CD8-positive, alpha-beta memory T cell (primary cell): ENCODE measurements at regions of chr22 and their contacts with region 1.

Region 1: DNA sequence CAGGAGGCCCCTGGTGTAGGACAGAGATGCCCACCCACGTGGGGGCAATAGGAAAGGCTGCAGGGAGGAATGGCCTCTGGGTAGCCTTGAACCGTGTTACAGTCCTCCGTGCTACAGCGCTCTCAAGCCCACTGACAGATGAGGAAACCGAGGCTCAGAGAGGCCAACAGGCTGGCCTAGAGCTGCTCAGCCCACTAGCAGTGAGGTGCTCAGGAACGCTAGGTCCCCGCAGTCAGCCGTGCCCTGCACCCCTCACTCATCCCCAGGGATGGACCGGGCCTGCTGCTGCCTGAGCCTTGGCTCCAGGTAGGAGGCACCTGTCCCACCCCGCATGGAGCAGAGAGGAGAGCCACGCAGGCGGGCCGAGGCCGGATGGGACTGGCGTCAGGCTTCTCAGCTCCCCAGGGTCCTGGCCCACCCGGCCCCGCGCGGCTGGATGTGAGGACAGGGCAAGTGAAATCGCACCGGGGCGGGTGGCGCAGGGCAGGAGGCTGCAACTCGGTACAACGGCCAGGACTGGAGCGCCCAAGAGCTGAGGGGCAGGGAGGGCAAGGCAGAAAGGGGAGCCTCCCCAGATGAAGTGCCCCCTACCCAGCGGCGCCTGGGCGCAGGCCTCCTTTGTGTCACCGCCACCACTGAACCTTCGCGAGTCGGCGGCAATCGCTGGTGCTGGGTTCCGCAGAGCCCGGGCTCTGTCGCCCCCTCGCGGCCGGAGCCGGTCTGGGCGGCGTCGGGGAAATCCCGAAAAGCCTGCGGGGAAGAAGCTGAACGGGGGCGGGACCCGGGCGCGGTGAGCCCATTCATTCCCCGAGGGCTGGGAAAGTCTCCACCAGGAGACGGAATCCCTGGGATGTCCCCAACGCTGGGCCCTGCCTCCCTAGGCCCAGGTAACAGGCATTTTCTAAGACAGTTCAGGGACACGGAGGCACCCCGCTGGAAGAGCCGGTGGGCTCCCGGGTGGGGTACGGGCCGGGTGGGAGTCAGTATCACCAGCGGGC is 8.4 kb upstream of the SLC2A11 start:
- DNase-seq: peak; percentile 75 to 86 (median 82)
- H3K4me3 ChIP-seq: no peak overlapping the region
- H3K4me3 Mint-ChIP-seq: no peak overlapping the region
- H3K27ac ChIP-seq: no peak overlapping the region
- H3K27ac Mint-ChIP-seq: no peak overlapping the region
- H3K4me1 ChIP-seq: no peaks in the 10 kb centered on the region
- H3K4me1 Mint-ChIP-seq: peaks cover 0 to 6% (median 0%) of the 10 kb centered on the region in 3 donors
- H3K27me3 ChIP-seq: no peaks in the 10 kb centered on the region
- H3K27me3 Mint-ChIP-seq: no peaks in the 10 kb centered on the region

Region 2: DNA sequence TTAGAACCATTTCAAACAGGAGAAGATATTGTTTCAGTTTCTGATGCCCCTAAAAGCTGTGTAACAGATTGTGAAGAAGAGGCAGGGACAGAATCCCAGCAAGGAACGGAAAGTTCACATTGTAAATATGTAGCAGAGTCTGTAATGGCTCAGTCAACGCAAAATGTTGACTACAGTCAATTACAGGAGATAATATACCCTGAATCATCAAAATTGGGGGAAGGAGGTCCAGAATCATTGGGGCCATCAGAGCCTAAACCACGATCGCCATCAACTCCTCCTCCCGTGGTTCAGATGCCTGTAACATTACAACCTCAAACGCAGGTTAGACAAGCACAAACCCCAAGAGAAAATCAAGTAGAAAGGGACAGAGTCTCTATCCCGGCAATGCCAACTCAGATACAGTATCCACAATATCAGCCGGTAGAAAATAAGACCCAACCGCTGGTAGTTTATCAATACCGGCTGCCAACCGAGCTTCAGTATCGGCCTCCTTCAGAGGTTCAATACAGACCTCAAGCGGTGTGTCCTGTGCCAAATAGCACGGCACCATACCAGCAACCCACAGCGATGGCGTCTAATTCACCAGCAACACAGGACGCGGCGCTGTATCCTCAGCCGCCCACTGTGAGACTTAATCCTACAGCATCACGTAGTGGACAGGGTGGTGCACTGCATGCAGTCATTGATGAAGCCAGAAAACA is 310.0 kb before region 1 on chr22:
- CTCF ChIA-PET with region 1: interaction called, 14 read pairs
- POLR2A ChIA-PET with region 1: no interaction called
- DNase-seq: peak; percentile 52 to 81 (median 63)
- H3K4me3 ChIP-seq: no peak overlapping the region
- H3K4me3 Mint-ChIP-seq: peak overlapping the region in 6 of 7 donors; percentile 35 to 70 (median 60)
- H3K27ac ChIP-seq: no peak overlapping the region
- H3K27ac Mint-ChIP-seq: peak overlapping the region in 4 of 8 donors; percentile 2 to 58 (median 23)
- H3K4me1 ChIP-seq: no peaks in the 10 kb centered on the region
- H3K4me1 Mint-ChIP-seq: peaks cover 9 to 14% (median 10%) of the 10 kb centered on the region in 3 donors
- H3K27me3 ChIP-seq: no peaks in the 10 kb centered on the region
- H3K27me3 Mint-ChIP-seq: peaks cover 0 to 4% of the 10 kb centered on the region in 2 donors

Region 3: GRCh38 chr22:23622634-23623033 is 226.7 kb before region 1 on chr22:
- CTCF ChIA-PET with region 1: interaction called, 15 read pairs
- POLR2A ChIA-PET with region 1: no interaction called
- DNase-seq: no peak
- H3K4me3 ChIP-seq: no peak overlapping the region
- H3K4me3 Mint-ChIP-seq: no peak overlapping the region
- H3K27ac ChIP-seq: no peak overlapping the region
- H3K27ac Mint-ChIP-seq: no peak overlapping the region
- H3K4me1 ChIP-seq: no peaks in the 10 kb centered on the region
- H3K4me1 Mint-ChIP-seq: no peaks in the 10 kb centered on the region
- H3K27me3 ChIP-seq: no peaks in the 10 kb centered on the region
- H3K27me3 Mint-ChIP-seq: peaks cover 0 to 2% of the 10 kb centered on the region in 2 donors

Region 4: DNA sequence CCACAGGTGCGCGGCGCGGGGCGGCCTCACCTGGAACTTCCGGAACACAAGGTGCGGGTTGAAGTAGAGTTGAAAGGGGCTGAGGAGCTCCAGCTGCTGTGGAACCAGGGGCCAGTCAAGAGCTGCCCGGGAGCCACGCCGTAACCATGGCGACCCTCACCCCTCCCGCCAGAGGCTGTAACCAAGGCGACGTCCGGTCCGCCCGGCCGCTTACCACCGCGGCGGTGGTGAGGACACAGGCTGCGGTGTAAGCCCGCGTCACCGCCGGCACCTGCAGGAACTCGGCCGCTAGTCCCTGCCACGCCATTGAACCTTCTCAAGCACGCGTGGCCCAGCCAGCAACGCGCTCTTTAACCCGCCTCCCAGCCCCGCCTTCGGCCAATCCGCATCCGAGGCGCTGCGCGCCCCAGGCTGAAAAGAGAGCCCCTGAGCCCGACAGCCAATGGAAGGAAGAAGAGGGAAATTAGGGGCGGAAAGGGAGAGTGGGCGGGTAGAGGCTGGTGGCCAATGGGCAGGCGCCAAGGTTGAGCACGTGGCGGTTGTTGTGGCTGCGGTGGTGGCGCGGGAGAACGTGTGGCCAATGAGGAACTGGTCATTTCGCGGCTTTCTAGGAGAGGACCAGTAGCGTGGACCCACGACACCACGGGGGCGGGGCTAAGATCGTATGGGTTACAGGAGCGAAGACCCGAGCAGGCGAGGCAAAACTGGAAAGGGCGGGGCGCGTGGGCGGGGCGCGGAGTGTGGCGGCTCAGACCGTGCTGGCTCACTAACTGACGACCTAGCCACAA is 10.4 kb before region 1 on chr22 and contains the start of gene DERL3:
- CTCF ChIA-PET with region 1: interaction called, 14 read pairs
- POLR2A ChIA-PET with region 1: no interaction called
- DNase-seq: peak; percentile 89 to 96 (median 92)
- H3K4me3 ChIP-seq: peak within 1 kb of the TSS; percentile 67
- H3K4me3 Mint-ChIP-seq: peak within 1 kb of the TSS; percentile 76 to 93 (median 91)
- H3K27ac ChIP-seq: no peak within 1 kb of the TSS
- H3K27ac Mint-ChIP-seq: peak within 1 kb of the TSS; percentile 67 to 98 (median 94)
- H3K4me1 ChIP-seq: peaks cover 11% of the 10 kb centered on the region
- H3K4me1 Mint-ChIP-seq: peaks cover 19 to 29% (median 19%) of the 10 kb centered on the region in 3 donors
- H3K27me3 ChIP-seq: no peaks in the 10 kb centered on the region
- H3K27me3 Mint-ChIP-seq: peaks cover 0 to 2% of the 10 kb centered on the region in 2 donors
- total RNA-seq, gene DERL3: 5.4 to 5.8 TPM